ENCODE measurements at regions of chr3 and their contacts with region 1.

Region 1: GRCh38 chr3:121545574-121546455 is at the start of gene POLQ:
- DNase-seq: peak; percentile 97
- H3K4me3 ChIP-seq: peak within 1 kb of the TSS; percentile 47 to 93 (median 66)
- H3K27ac ChIP-seq: peak within 1 kb of the TSS; percentile 74 to 91 (median 87)
- H3K4me1 ChIP-seq: peaks cover 4 to 40% (median 17%) of the 10 kb centered on the region in 6 donors
- H3K27me3 ChIP-seq: no peaks in the 10 kb centered on the region
- CTCF ChIP-seq: no peak
- POLR2A ChIP-seq: no peak
- total RNA-seq, gene POLQ: 0.76 to 4.7 (median 2.2) TPM

Region 2: GRCh38 chr3:121477589-121477988 is 68.2 kb before region 1 on chr3:
- intact Hi-C with region 1: no loop called
- DNase-seq: no peak
- H3K4me3 ChIP-seq: no peak overlapping the region
- H3K27ac ChIP-seq: no peak overlapping the region
- H3K4me1 ChIP-seq: no peaks in the 10 kb centered on the region
- H3K27me3 ChIP-seq: no peaks in the 10 kb centered on the region
- CTCF ChIP-seq: no peak
- POLR2A ChIP-seq: no peak

Region 3: DNA sequence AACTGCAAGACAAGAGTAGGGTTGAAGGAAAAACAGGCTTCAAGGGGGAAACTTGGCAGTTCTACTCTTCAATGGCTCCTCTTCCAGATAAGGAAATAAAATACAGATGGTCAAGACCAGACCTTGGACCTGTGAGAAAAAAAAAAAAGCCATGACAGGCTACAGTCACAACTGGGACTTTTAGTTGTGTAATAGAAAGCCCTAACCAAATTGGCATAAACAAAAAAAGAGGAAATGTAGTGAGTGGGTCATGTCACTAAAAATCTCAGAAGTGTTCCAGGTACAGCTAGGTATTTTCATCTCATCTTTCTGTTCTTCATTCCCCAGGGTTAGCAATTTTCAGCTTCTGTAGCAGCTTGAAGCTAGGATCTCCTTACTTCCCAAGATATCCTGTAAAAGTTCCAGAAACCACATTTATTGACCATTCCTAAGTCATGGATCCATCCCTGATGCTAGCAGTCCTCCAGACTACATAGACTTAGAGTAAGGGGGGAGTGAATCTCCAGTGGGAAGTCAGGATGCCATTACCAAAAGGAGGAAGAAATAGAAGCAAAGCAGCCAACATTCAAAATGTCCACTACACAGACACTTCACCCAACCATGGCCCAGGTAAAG is 718.3 kb after region 1 on chr3:
- intact Hi-C with region 1: loop called (anchors 5 kb)
- DNase-seq: no peak
- H3K4me3 ChIP-seq: no peak overlapping the region
- H3K27ac ChIP-seq: peak overlapping the region in 1 of 8 donors; percentile 22
- H3K4me1 ChIP-seq: no peaks in the 10 kb centered on the region
- H3K27me3 ChIP-seq: peaks cover 0 to 4% (median 0%) of the 10 kb centered on the region in 7 donors
- CTCF ChIP-seq: no peak
- POLR2A ChIP-seq: no peak

Region 4: DNA sequence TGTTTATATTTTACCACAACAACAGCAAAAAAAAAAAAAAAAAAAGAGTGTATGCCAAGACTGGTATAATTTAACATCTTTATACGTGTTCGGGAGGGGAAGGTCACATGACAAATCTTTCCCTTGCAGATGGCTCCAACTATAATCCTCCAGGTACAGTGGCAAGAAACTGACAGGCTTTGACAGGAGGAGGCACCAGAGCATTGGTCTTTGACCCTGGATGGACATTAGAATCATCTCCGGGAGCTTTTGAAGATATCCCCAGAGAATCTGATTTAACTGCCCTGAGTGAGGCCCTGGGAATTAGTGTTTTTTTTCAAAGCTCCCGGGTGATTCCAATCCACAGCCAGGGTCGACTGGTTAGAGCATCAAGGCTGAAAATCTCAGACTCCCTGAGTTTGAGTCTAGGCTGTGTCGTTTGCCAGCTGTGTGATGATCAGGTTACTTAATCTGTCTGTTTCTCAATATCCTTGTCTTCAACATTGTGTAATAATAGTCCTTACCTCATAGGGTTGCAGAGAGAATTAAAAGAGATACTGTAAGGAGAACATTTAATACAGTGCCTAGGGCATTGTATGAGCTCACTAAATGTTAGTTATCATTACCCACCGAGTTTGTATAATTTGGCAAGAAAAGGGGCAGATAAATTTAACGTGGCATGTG is 1490.7 kb after region 1 on chr3:
- intact Hi-C with region 1: loop called (anchors 10 kb)
- DNase-seq: no peak
- H3K4me3 ChIP-seq: no peak overlapping the region
- H3K27ac ChIP-seq: peak overlapping the region in 1 of 8 donors; percentile 22
- H3K4me1 ChIP-seq: peaks cover 0 to 26% (median 2%) of the 10 kb centered on the region in 6 donors
- H3K27me3 ChIP-seq: peaks cover 0 to 8% (median 0%) of the 10 kb centered on the region in 7 donors
- CTCF ChIP-seq: no peak
- POLR2A ChIP-seq: no peak